Posterior cingulate gyrus (tissue), 11 donors: ENCODE measurements at regions of chr2 and their contacts with region 1.

Region 1: GRCh38 chr2:163471947-163472346 is 263.9 kb downstream of the FIGN start:
- DNase-seq: no peak

Region 2: GRCh38 chr2:164061129-164061746 is 589.3 kb after region 1 on chr2:
- intact Hi-C with region 1: loop called (anchors 10 kb)
- DNase-seq: peak in 4 of 10 donors; percentile 18 to 57 (median 40)